ENCODE measurements at regions of chr6 and their contacts with region 1.

Region 1: GRCh38 chr6:26025894-26026832 is 61.1 kb upstream of the HFE start:
- DNase-seq: peak; percentile 72 to 98 (median 76)
- ATAC-seq: peak; percentile 43
- H3K4me3 ChIP-seq: peak overlapping the region; percentile 46
- H3K27ac ChIP-seq: peak overlapping the region; percentile 99
- H3K4me1 ChIP-seq: peaks cover 13 to 40% of the 10 kb centered on the region in 2 experiments
- H3K27me3 ChIP-seq: no peaks in the 10 kb centered on the region
- CTCF ChIP-seq: peak; percentile 81 to 98 (median 97)
- EP300 ChIP-seq: peak; percentile 75
- POLR2A ChIP-seq: no peak
- RAD21 ChIP-seq: peak; percentile 48 to 77

Region 2: GRCh38 chr6:25925876-25926275 is 100.3 kb before region 1 on chr6:
- CTCF ChIA-PET with region 1: no interaction called
- POLR2A ChIA-PET with region 1: interaction called, 11 read pairs
- in situ Hi-C with region 1: no loop called
- intact Hi-C with region 1: no loop called
- DNase-seq: no peak
- ATAC-seq: peak; percentile 72
- H3K4me3 ChIP-seq: no peak overlapping the region
- H3K27ac ChIP-seq: no peak overlapping the region
- H3K4me1 ChIP-seq: no peaks in the 10 kb centered on the region; a peak in 1 of 5 replicates
- H3K27me3 ChIP-seq: peaks cover 5 to 25% of the 10 kb centered on the region in 2 experiments; a peak in 3 of 5 replicates
- CTCF ChIP-seq: no peak
- EP300 ChIP-seq: peak; percentile 20; the same call in 1 of the 2 replicates
- POLR2A ChIP-seq: no peak
- RAD21 ChIP-seq: no peak

Region 3: DNA sequence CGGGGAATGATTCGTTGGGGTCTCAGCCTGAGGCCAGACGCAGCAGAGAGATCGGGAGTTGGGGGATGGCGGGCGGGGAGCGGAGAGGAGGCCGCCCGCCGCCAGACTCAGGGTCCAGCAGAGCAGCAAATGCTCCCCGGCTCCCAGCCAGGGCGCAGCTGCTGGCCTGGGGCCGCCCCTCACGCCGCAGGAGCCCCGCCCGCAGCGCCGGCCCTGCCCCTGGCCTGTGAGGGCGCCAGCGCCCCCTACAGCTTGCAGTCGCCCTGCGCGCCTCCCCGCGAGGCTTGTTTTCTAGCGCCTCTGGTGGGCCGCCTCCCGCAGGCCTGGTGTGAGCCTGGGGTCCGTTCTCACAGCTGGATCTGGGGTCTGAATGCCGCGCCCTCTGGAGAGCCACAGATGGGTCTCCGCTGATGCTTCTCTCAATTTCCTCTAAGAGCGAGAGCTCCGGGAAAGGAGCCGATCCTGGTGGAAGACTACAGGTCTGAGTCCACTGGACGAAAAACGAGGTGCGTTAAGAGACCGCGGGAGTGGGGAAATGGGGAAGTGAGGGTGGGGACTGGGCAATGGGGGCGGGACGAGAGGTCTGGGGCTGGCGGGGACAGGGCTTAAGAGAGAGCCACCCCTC is 33.6 kb before region 1 on chr6:
- CTCF ChIA-PET with region 1: no interaction called
- POLR2A ChIA-PET with region 1: interaction called, 47 read pairs
- in situ Hi-C with region 1: no loop called
- intact Hi-C with region 1: loop called (anchors 1 kb)
- DNase-seq: peak; percentile 95 to 98 (median 95)
- ATAC-seq: peak; percentile 93
- H3K4me3 ChIP-seq: peak overlapping the region; percentile 72
- H3K27ac ChIP-seq: peak overlapping the region; percentile 95
- H3K4me1 ChIP-seq: peaks cover 10 to 11% of the 10 kb centered on the region in 2 experiments
- H3K27me3 ChIP-seq: no peaks in the 10 kb centered on the region
- CTCF ChIP-seq: peak; percentile 100
- EP300 ChIP-seq: peak; percentile 44
- POLR2A ChIP-seq: peak; percentile 93
- RAD21 ChIP-seq: peak; percentile 82 to 91

Region 4: DNA sequence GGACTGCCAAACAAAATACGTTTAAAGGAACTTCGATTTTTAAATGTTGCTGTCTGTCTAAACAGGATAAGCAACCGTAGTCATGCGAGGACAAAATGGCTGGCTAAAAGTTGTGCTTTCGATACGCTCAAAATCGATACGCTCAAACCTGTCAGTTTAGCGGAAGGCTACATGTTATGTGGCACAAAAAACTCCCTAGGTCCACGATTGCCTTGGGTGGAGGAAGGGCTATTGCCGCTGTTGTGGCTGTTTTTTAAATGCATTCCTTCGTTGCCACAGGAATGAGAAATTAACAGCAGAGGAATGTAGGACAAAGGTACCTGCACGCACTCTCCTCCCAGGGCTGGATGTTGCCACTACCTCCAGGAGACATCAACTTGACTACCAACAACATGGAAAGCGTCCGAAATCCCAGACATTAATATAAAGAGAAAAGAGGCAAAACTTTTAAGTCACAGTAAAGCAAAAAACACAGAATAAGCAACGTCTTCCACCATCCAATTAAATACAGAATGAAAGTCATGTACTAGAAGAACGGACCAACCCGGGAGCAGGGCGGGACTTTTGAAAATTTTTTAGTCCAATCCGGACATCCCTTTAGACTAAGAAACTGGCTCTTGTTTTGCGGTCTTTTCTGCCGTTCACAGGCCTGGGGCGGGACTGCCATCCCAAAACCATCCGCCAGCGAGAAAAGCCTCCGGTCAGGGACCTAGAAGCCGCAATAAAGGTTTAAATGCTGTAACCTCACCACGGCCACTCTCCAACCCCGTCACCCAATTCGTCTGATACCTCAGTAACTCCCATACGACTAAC is 28.9 kb after region 1 on chr6:
- CTCF ChIA-PET with region 1: interaction called, 5 read pairs
- POLR2A ChIA-PET with region 1: interaction called, 597 read pairs
- in situ Hi-C with region 1: no loop called
- intact Hi-C with region 1: loop called (anchors 1 kb)
- DNase-seq: peak; percentile 81 to 95 (median 88)
- ATAC-seq: peak; percentile 68
- H3K4me3 ChIP-seq: peak overlapping the region; percentile 60
- H3K27ac ChIP-seq: peak overlapping the region; percentile 94
- H3K4me1 ChIP-seq: peaks cover 7 to 29% of the 10 kb centered on the region in 2 experiments
- H3K27me3 ChIP-seq: no peaks in the 10 kb centered on the region
- CTCF ChIP-seq: peak; percentile 24 to 42 (median 29); a peak in 3 of 6 replicates
- EP300 ChIP-seq: peak; percentile 34
- POLR2A ChIP-seq: peak; percentile 95
- RAD21 ChIP-seq: peak in 1 of 2 experiments; percentile 59; a peak in 2 of 4 replicates

Region 5: DNA sequence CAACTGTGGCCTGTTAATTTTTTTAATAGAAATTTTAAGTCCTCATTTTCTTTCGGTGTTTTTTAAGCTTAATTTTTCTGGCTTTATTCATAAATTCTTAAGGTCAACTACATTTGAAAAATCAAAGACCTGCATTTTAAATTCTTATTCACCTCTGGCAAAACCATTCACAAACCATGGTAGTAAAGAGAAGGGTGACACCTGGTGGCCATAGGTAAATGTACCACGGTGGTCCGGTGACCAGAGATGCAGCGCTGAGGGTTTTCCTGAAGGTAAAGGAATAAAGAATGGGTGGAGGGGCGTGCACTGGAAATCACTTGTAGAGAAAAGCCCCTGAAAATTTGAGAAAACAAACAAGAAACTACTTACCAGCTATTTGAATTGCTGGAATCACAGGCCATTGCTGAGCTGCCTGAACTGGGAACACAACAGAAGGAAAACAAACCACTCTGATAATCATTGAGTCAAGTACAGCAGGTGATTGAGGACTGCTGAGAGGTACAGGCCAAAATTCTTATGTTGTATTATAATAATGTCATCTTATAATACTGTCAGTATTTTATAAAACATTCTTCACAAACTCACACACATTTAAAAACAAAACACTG is 71.2 kb after region 1 on chr6:
- CTCF ChIA-PET with region 1: interaction called, 17 read pairs
- POLR2A ChIA-PET with region 1: interaction called, 149 read pairs
- in situ Hi-C with region 1: loop called (anchors 5 kb)
- intact Hi-C with region 1: loop called (anchors 2 kb)
- DNase-seq: peak; percentile 67 to 85 (median 77)
- ATAC-seq: peak; percentile 91
- H3K4me3 ChIP-seq: no peak overlapping the region
- H3K27ac ChIP-seq: no peak overlapping the region
- H3K4me1 ChIP-seq: peaks cover 0 to 8% of the 10 kb centered on the region in 2 experiments; a peak in 2 of 5 replicates
- H3K27me3 ChIP-seq: no peaks in the 10 kb centered on the region
- CTCF ChIP-seq: peak; percentile 80 to 87 (median 85)
- EP300 ChIP-seq: no peak
- POLR2A ChIP-seq: no peak
- RAD21 ChIP-seq: peak; percentile 96 to 98

Region 6: DNA sequence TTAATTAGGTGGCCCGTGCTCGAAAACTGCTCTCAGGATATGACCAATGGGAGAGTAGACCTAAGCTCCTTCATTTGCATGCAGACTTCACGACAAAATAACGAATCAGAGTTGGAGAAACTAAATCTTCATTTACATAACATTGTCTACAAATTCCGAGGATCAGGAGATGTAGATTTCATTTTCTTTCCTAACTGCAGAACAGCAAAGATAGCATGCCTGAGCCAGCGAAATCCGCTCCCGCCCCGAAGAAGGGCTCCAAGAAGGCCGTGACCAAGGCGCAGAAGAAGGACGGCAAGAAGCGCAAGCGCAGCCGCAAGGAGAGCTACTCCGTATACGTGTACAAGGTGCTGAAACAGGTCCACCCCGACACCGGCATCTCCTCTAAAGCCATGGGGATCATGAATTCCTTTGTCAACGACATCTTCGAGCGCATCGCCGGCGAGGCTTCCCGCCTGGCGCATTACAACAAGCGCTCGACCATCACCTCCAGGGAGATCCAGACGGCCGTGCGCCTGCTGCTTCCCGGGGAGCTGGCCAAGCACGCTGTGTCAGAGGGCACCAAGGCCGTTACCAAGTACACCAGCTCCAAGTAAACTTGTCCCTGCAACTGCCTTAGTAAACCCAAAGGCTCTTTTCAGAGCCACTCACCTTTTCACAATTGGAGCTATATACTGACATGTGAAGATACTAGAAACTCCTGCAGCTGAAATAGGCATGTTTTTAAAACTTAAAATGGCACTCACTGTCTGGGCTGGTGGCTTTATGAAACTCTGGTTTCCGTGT is 157.6 kb after region 1 on chr6:
- CTCF ChIA-PET with region 1: no interaction called
- POLR2A ChIA-PET with region 1: interaction called, 30 read pairs
- in situ Hi-C with region 1: no loop called
- intact Hi-C with region 1: no loop called
- DNase-seq: no peak
- ATAC-seq: no peak
- H3K4me3 ChIP-seq: no peak overlapping the region
- H3K27ac ChIP-seq: no peak overlapping the region
- H3K4me1 ChIP-seq: peaks cover 0 to 18% of the 10 kb centered on the region in 2 experiments; a peak in 4 of 5 replicates
- H3K27me3 ChIP-seq: no peaks in the 10 kb centered on the region
- CTCF ChIP-seq: no peak
- EP300 ChIP-seq: no peak
- POLR2A ChIP-seq: no peak
- RAD21 ChIP-seq: no peak

Measured in K562 (cell line).